Common myeloid progenitor, CD34-positive (primary cell): ENCODE measurements at regions of chr11 and their contacts with region 1.

Region 1: GRCh38 chr11:72483412-72484186 is 49.3 kb upstream of the CLPB start:
- DNase-seq: peak; percentile 29 to 86 (median 77)
- H3K4me3 ChIP-seq: no peak overlapping the region
- H3K27ac ChIP-seq: no peak overlapping the region
- H3K4me1 ChIP-seq: peaks cover 0 to 14% (median 11%) of the 10 kb centered on the region in 4 experiments
- H3K27me3 ChIP-seq: no peaks in the 10 kb centered on the region

Region 2: DNA sequence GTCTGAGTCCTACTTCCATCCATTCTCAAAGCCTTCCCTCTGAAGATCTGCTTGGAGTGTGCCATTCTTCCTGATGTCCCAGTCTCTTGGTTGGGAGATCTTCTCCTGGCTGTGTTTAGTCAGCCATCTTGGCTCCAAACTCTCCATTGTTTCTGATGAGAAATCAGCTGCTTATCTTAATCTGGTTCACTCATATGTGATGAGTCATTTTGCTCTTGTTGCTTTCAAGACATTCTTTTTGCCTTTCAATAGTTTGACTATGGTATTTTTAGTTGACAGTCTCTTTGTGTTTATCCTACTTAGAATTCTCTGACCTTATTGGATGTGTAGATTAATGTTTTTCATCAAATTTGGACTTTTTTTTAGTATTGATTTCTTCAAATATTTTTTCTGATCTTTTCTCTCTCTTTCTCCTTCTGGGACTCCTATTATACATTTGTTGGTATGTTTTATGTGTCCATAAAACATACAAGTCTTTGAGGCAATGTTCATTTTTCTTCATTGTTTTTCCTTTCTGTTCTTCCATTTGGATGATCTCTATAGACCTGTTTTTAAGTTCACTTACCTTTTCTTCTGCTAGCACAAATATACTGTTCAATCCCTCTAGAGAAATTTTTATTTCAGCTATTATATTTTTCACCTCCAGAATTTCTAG is 27.9 kb after region 1 on chr11:
- CTCF ChIA-PET with region 1: no interaction called
- POLR2A ChIA-PET with region 1: no interaction called
- DNase-seq: peak in 2 of 3 donors; percentile 21 to 33
- H3K4me3 ChIP-seq: no peak overlapping the region
- H3K27ac ChIP-seq: no peak overlapping the region
- H3K4me1 ChIP-seq: no peaks in the 10 kb centered on the region
- H3K27me3 ChIP-seq: no peaks in the 10 kb centered on the region

Region 3: GRCh38 chr11:72573072-72573854 is 89.7 kb after region 1 on chr11:
- CTCF ChIA-PET with region 1: interaction called, 10 read pairs
- POLR2A ChIA-PET with region 1: no interaction called
- DNase-seq: peak; percentile 51 to 63 (median 60)
- H3K4me3 ChIP-seq: no peak overlapping the region
- H3K27ac ChIP-seq: no peak overlapping the region
- H3K4me1 ChIP-seq: peaks cover 0 to 7% (median 0%) of the 10 kb centered on the region in 4 experiments
- H3K27me3 ChIP-seq: peaks cover 0 to under 1% (median 0%) of the 10 kb centered on the region in 5 experiments